ENCODE measurements at regions of chr16 and their contacts with region 1.

Region 1: DNA sequence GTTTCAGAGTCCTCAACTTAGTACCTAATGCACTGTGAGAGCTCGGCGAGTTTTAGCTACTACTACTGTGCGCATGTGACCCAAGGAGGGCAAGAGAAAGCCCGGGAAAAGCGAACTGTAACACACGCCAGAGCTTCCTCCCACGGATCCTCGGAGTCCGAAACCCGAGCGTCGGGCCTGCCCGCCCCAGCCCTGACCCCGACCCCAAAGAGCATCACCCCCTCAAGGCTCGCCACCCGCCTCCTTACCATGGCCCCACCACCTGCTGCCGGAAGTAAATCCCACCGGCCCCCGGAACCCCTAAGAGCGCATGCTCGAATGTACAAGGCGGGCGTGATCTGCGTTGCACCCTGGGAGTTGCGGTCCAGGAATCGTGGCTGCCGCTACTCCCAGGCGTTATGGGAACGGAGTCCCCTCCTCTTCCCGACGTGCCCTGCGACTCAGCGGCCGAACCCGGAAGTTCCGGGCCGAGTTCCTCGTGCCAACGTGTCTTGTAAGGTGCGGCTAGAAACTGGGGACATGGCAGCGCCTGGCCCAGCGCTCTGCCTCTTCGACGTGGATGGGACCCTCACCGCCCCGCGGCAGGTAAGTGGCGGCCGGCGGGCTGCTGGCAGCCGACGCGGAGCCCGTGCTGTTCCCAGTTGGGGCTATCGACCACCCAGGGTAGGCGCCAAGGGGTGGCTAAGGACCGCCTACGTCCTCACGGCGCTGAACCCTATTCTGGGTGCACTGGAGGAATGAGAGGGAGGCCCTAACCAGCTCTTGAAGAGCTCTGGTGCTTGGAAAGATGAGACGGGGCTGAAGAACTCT is at the starts of genes PMM2 and TMEM186:
- DNase-seq: peak; percentile 95
- ATAC-seq: peak; percentile 99
- H3K4me3 ChIP-seq: peak within 1 kb of the TSS; percentile 78
- H3K27ac ChIP-seq: peak within 1 kb of the TSS; percentile 93
- H3K4me1 ChIP-seq: peaks cover 7% of the 10 kb centered on the region
- H3K27me3 ChIP-seq: no peaks in the 10 kb centered on the region
- CTCF ChIP-seq: no peak
- POLR2A ChIP-seq: peak; percentile 94
- RAD21 ChIP-seq: no peak
- total RNA-seq, gene PMM2: 25.8 and 36.1 TPM in 2 replicates
- total RNA-seq, gene TMEM186: 5.7 and 5.8 TPM in 2 replicates

Region 2: DNA sequence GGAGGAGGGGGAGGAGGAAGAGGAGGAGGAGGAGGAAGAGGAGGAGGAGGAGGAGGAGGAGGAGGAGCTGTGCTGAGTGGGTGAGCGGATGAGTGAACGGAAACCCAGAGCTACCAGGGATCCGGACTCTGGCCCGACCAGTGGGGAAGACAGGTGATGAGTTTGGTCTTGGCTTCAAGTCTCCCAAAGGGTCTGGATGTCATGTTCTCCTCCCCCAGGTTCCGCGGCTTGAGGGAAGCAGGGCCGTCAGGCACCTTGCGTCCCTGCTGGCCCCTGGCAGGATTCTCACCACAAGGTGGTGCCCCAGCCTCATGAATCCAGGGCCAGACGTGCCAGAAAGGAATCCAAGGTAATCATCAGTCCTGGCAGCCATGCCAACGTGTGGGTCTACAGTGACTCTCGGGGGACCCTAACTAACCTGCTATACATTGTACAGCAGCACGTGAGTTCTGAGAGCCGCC is 136.7 kb before region 1 on chr16:
- CTCF ChIA-PET with region 1: interaction called, 3 read pairs
- POLR2A ChIA-PET with region 1: no interaction called
- dilution Hi-C with region 1: no loop called
- in situ Hi-C with region 1: loop called (anchors 5 kb)
- intact Hi-C with region 1: loop called (anchors 1 kb)
- DNase-seq: peak; percentile 58
- ATAC-seq: peak; percentile 90
- H3K4me3 ChIP-seq: no peak overlapping the region
- H3K27ac ChIP-seq: no peak overlapping the region
- H3K4me1 ChIP-seq: no peaks in the 10 kb centered on the region
- H3K27me3 ChIP-seq: peaks cover 2% of the 10 kb centered on the region
- CTCF ChIP-seq: peak; percentile 90
- POLR2A ChIP-seq: no peak
- RAD21 ChIP-seq: peak; percentile 98

Region 3: GRCh38 chr16:8751481-8752311 is 45.9 kb before region 1 on chr16:
- CTCF ChIA-PET with region 1: no interaction called
- POLR2A ChIA-PET with region 1: interaction called, 11 read pairs
- dilution Hi-C with region 1: no loop called
- in situ Hi-C with region 1: no loop called
- intact Hi-C with region 1: no loop called
- DNase-seq: peak; percentile 78
- ATAC-seq: peak; percentile 88
- H3K4me3 ChIP-seq: no peak overlapping the region
- H3K27ac ChIP-seq: no peak overlapping the region
- H3K4me1 ChIP-seq: peaks cover 9% of the 10 kb centered on the region
- H3K27me3 ChIP-seq: no peaks in the 10 kb centered on the region
- CTCF ChIP-seq: no peak
- POLR2A ChIP-seq: no peak
- RAD21 ChIP-seq: no peak

Region 4: GRCh38 chr16:8868416-8869211 is 71.0 kb after region 1 on chr16 and contains the start of gene CARHSP1:
- CTCF ChIA-PET with region 1: no interaction called
- POLR2A ChIA-PET with region 1: no interaction called
- dilution Hi-C with region 1: no loop called
- in situ Hi-C with region 1: no loop called
- intact Hi-C with region 1: loop called (anchors 5 kb)
- DNase-seq: peak; percentile 79
- ATAC-seq: peak; percentile 84
- H3K4me3 ChIP-seq: peak within 1 kb of the TSS; percentile 71
- H3K27ac ChIP-seq: peak within 1 kb of the TSS; percentile 90
- H3K4me1 ChIP-seq: peaks cover 13% of the 10 kb centered on the region
- H3K27me3 ChIP-seq: no peaks in the 10 kb centered on the region
- CTCF ChIP-seq: no peak
- POLR2A ChIP-seq: peak; percentile 80
- RAD21 ChIP-seq: no peak
- total RNA-seq, gene CARHSP1: 96.4 and 138 TPM in 2 replicates

Measured in IMR-90 (cell line).